ENCODE measurements at regions of chr9 and their contacts with region 1.

Region 1: GRCh38 chr9:100437860-100438805 is 11.2 kb downstream of the MSANTD3 start:
- DNase-seq: peak; percentile 72 to 81 (median 77)
- H3K4me3 ChIP-seq: no peak overlapping the region
- H3K27ac ChIP-seq: no peak overlapping the region
- H3K4me1 ChIP-seq: no peaks in the 10 kb centered on the region
- H3K27me3 ChIP-seq: no peaks in the 10 kb centered on the region

Region 2: GRCh38 chr9:100346836-100347235 is 91.3 kb before region 1 on chr9:
- CTCF ChIA-PET with region 1: interaction called, 14 read pairs
- POLR2A ChIA-PET with region 1: no interaction called
- DNase-seq: no peak
- H3K4me3 ChIP-seq: no peak overlapping the region
- H3K27ac ChIP-seq: no peak overlapping the region
- H3K4me1 ChIP-seq: peaks cover 11 to 26% (median 19%) of the 10 kb centered on the region in 4 experiments
- H3K27me3 ChIP-seq: no peaks in the 10 kb centered on the region

Region 3: GRCh38 chr9:100426530-100427428 is 11.4 kb before region 1 on chr9 and contains the start of gene MSANTD3:
- CTCF ChIA-PET with region 1: interaction called, 10 read pairs
- POLR2A ChIA-PET with region 1: no interaction called
- DNase-seq: peak; percentile 60 to 86 (median 75)
- H3K4me3 ChIP-seq: peak within 1 kb of the TSS; percentile 76 to 90 (median 84)
- H3K27ac ChIP-seq: peak within 1 kb of the TSS; percentile 66 to 86
- H3K4me1 ChIP-seq: peaks cover 5 to 27% (median 18%) of the 10 kb centered on the region in 4 experiments
- H3K27me3 ChIP-seq: no peaks in the 10 kb centered on the region

Region 4: GRCh38 chr9:100449420-100449819 is 11.3 kb after region 1 on chr9:
- CTCF ChIA-PET with region 1: interaction called, 34 read pairs
- POLR2A ChIA-PET with region 1: no interaction called
- DNase-seq: no peak
- H3K4me3 ChIP-seq: no peak overlapping the region
- H3K27ac ChIP-seq: no peak overlapping the region
- H3K4me1 ChIP-seq: peaks cover 0 to 2% (median 0%) of the 10 kb centered on the region in 4 experiments
- H3K27me3 ChIP-seq: no peaks in the 10 kb centered on the region

Region 5: DNA sequence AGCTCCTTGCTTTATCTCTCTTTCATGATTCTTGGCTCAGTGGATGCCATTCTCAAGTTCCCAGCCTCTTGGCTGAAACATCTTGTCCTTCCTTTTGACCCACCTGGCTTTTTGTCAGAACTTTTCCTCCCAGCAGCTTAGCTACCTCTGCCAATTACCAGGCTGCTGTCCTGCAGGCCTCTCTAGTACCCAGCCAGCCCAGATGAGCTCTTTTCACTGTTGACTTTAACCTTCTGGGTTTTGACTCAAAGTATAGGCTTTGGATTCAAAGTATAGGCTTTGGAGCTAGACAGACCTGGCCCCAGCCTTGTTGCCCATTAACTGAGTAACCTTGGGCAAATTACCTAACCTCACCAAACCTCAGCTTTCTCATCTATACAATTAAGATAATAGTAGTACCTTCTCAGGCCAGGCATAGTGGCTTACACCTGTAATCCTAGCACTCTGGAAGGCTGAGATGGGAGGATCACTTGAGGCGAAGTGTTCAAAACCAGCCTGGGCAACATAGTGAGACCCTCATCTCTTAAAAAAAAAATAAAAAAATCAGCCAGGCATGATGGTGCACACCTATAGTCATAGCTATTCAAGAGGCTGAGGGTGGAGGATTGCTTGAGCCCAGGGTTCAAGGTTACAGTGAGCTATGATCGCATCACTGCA is 28.2 kb after region 1 on chr9:
- CTCF ChIA-PET with region 1: no interaction called
- POLR2A ChIA-PET with region 1: no interaction called
- DNase-seq: no peak
- H3K4me3 ChIP-seq: no peak overlapping the region
- H3K27ac ChIP-seq: no peak overlapping the region
- H3K4me1 ChIP-seq: no peaks in the 10 kb centered on the region
- H3K27me3 ChIP-seq: no peaks in the 10 kb centered on the region